ENCODE measurements at regions of chr1 and their contacts with region 1.

Region 1: GRCh38 chr1:151327223-151327902 is at the start of gene PI4KB:
- DNase-seq: peak; percentile 92 to 94
- H3K4me3 ChIP-seq: peak within 1 kb of the TSS; percentile 74
- H3K27ac ChIP-seq: peak within 1 kb of the TSS; percentile 80
- H3K4me1 ChIP-seq: peaks cover 20% of the 10 kb centered on the region
- H3K27me3 ChIP-seq: no peaks in the 10 kb centered on the region
- CTCF ChIP-seq: no peak
- total RNA-seq, gene PI4KB: 40.0 and 44.3 TPM in 2 replicates

Region 2: GRCh38 chr1:151281969-151282882 is 45.1 kb before region 1 on chr1 and contains the start of gene ZNF687:
- CTCF ChIA-PET with region 1: no interaction called
- POLR2A ChIA-PET with region 1: interaction called, 31 read pairs
- intact Hi-C with region 1: no loop called
- DNase-seq: peak; percentile 99 to 100
- H3K4me3 ChIP-seq: peak within 1 kb of the TSS; percentile 62
- H3K27ac ChIP-seq: peak within 1 kb of the TSS; percentile 90
- H3K4me1 ChIP-seq: peaks cover 13% of the 10 kb centered on the region; the same call in 1 of the 2 replicates
- H3K27me3 ChIP-seq: no peaks in the 10 kb centered on the region
- CTCF ChIP-seq: no peak
- total RNA-seq, gene ZNF687: 26.6 and 28.7 TPM in 2 replicates

Region 3: DNA sequence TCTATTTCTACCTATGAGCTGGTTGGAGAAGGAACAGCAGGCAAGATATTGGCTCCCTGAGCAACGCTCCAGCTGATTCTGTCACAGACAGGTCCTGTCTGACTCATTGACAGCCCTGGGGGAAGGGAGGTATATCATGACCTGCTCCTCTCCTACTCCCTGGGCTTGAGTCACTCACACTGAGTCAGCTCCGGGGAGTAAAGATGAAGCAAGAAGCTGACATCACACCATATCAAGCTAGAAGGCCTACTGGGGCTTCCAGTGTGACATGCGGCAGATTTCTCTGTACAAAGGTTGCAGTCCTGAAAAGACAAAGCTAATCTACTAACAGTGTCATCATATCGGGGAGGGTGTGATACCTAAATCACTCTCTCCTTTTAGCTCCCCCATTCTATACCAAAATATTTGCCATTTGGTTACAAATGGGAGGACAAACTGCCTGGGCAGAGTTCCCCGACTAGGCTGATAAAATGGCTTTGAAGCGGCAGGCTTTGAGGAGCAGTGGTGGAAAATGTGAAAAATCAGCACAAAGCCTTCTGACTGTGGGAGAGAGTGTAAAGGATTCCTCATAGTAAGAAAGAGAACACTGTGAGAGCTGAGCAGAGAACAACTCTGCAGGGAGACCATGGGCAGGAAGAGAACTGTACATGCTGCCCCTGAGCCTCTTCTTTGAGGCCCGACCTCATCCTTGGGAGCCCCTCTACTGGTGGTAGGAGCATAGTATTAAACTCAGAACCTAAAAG is 15.6 kb before region 1 on chr1:
- CTCF ChIA-PET with region 1: no interaction called
- POLR2A ChIA-PET with region 1: interaction called, 18 read pairs
- intact Hi-C with region 1: no loop called
- DNase-seq: peak; percentile 78 to 98
- H3K4me3 ChIP-seq: no peak overlapping the region
- H3K27ac ChIP-seq: peak overlapping the region; percentile 88
- H3K4me1 ChIP-seq: peaks cover 21% of the 10 kb centered on the region
- H3K27me3 ChIP-seq: no peaks in the 10 kb centered on the region
- CTCF ChIP-seq: no peak

Region 4: GRCh38 chr1:151340870-151341754 is 13.7 kb after region 1 on chr1:
- CTCF ChIA-PET with region 1: interaction called, 14 read pairs
- POLR2A ChIA-PET with region 1: interaction called, 5 read pairs
- intact Hi-C with region 1: no loop called
- DNase-seq: peak; percentile 41 to 76
- H3K4me3 ChIP-seq: no peak overlapping the region
- H3K27ac ChIP-seq: peak overlapping the region; percentile 32
- H3K4me1 ChIP-seq: peaks cover 2% of the 10 kb centered on the region; the same call in 1 of the 2 replicates
- H3K27me3 ChIP-seq: no peaks in the 10 kb centered on the region
- CTCF ChIP-seq: peak; percentile 85

Region 5: DNA sequence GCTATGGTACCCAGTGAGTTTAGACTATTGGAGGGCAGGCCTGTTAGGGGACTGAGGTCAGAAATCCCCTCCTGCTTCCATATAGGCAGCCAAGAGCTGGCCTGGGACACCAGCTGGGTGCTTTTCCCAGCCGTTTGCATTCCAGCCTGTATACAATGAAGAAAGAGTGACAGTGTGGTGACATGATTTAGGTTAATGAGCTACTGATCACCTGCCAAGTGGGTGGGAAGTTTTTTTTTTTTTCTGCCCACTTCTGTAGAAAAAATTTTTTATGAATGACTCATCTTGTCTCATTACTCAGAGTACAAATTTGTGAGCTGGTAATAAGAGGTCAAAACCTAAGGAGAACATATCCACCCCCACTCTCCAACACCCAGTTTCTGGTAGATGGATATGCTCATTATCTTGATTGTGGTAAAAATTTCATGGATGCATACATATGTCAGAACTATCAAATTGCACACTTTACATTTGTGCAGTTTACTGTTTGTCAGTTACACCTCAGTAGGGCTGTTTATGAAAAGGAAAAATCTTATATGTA is 167.4 kb after region 1 on chr1:
- CTCF ChIA-PET with region 1: no interaction called
- POLR2A ChIA-PET with region 1: interaction called, 16 read pairs
- intact Hi-C with region 1: no loop called
- DNase-seq: peak; percentile 64 to 92
- H3K4me3 ChIP-seq: no peak overlapping the region
- H3K27ac ChIP-seq: peak overlapping the region; percentile 73
- H3K4me1 ChIP-seq: peaks cover 25% of the 10 kb centered on the region
- H3K27me3 ChIP-seq: no peaks in the 10 kb centered on the region
- CTCF ChIP-seq: no peak

Region 6: DNA sequence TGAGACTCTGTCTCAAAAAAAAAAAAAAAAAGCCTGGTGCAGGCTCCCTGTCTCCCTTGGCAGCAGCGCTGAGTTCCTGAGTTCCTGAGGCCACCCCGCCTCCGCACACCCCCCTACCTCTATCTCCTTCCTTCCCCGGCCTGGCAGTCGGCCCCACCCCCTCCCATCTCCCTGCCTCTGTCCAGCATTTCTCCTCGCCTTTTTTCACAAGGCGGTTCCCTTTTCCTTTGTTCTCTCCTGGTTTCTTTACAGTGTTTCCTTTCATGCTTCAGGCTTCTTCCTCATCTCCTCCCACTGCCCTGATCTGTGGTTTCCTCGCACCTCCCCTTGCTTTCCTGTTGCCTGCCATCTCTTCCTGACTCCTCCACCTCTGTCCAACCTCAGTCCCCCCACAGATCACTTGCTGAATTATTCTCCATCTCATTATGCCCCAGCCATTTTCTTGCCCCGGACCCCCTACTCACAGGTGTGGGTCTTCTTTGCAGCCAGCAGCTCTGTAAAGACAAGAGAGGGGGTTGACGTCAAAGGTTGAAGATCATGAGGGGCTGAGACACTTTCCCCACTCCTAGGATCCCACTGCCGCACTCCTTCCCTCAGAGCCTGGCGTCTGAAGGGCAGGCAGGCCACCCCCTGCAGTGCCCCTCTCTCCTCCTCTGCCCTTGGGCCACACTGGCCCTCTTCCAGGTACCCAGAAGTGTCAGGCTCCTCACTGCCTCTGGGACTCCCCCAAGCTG is 501.8 kb after region 1 on chr1:
- CTCF ChIA-PET with region 1: no interaction called
- POLR2A ChIA-PET with region 1: no interaction called
- intact Hi-C with region 1: no loop called
- DNase-seq: peak in 1 of 2 experiments; percentile 53
- H3K4me3 ChIP-seq: no peak overlapping the region
- H3K27ac ChIP-seq: no peak overlapping the region
- H3K4me1 ChIP-seq: peaks cover 38% of the 10 kb centered on the region
- H3K27me3 ChIP-seq: no peaks in the 10 kb centered on the region
- CTCF ChIP-seq: no peak

Region 7: GRCh38 chr1:151871252-151872030 is 544.1 kb after region 1 on chr1:
- CTCF ChIA-PET with region 1: no interaction called
- POLR2A ChIA-PET with region 1: interaction called, 10 read pairs
- intact Hi-C with region 1: no loop called
- DNase-seq: no peak
- H3K4me3 ChIP-seq: no peak overlapping the region
- H3K27ac ChIP-seq: no peak overlapping the region
- H3K4me1 ChIP-seq: peaks cover 8% of the 10 kb centered on the region
- H3K27me3 ChIP-seq: no peaks in the 10 kb centered on the region
- CTCF ChIP-seq: no peak

Measured in PC-9 (cell line).